Lower leg skin (tissue), 4 donors: ENCODE measurements at regions of chr6 and their contacts with region 1.

Region 1: DNA sequence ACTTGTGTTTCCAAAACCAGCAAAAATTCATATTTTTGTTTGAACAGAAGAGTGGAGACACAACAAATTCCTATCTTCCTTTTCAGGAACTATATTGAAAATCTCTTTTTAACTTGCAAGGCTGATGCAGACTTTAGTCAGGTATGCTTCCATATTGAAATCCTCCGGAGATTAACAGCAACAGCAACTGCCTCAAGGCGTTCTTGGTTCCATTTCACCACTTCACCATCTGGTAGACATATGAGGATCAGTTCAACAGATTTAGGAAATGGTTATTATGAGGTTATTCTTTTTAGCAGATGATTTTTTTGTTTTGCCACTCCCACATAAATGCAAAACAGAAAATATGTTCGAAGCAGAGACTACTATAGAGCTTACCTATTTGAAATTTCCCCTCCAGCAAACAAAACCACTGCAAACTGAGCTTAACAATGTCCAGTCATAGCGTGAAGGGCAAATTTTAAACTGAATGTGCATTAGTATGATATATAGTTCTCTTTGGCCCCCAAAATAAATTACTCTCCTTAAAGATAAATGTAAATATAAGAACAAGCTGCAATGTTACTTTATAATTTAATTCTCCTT is 520.5 kb upstream of the ADGRB3 start:
- DNase-seq: no peak
- H3K4me3 ChIP-seq: no peak overlapping the region
- CTCF ChIP-seq: no peak
- POLR2A ChIP-seq: no peak

Region 2: DNA sequence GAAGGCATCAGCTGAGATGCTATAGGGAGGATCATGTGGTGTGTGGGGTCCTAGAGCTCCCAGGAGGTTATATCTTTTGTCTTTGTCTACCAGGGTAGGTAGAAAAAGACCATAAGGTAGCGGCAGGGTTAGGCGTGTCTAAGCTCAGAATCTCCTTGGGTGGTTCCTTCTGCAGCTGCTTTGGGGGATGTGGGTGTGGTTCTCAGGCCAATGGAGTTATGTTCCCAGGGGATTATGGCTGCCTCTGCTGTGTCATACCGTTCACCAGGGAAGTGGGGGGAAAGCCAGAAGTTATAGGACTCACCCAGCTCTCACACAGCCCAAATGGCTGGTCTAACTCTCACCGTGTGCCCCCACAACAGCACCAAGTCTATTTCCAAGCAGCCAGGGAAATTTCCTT is 413.1 kb after region 1 on chr6:
- intact Hi-C with region 1: no loop called
- DNase-seq: no peak
- H3K4me3 ChIP-seq: no peak overlapping the region
- CTCF ChIP-seq: no peak
- POLR2A ChIP-seq: no peak

Region 3: DNA sequence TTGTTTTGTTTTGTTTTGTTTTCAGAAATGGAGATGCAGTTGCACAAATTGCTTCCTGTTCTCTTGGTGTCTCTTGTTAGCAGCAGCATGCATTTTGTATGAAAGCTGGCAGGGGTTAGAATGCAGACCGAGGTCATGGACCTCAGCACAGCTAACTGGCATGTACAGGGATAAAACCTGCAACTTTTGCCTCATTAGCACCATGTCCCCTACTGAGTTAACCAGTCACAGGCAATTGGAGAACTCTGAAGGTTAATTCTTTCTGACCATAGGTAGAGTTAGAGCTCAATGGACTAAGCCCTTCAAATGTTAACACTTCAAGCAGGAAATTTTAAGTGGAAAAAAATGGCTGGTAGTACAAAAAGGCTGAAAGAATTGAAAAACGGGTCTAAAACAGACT is 897.7 kb after region 1 on chr6:
- intact Hi-C with region 1: loop called (anchors 5 kb)
- DNase-seq: no peak
- H3K4me3 ChIP-seq: no peak overlapping the region
- CTCF ChIP-seq: no peak
- POLR2A ChIP-seq: no peak